ENCODE measurements at regions of chr6 and their contacts with region 1.

Region 1: DNA sequence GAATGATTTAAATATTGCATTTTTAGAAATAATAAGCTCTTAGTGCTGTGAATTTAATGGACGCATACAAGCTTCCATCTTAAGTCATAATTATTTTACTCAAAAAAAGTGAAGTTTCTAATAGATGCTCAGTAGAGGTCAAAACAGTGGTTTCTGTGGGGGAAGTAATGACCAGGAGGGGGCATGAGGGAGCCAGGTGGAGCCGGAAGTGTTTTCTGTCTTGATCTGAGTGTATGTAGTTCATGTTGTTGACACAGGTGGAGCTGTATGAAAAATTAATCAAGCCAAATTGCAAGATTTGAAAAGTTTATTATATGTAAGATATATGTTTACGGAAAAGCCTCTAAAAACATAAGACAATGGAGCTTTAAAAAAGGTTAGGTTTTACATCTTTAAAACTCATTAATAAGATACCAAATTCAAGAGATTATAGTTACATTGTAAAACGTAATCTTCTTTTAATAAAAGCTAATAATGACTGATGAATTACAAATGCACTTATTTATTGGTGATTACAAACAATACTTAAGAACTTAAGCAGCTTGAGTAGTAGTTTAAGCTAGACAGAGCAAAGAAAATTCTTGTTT is 68.0 kb downstream of the PLAGL1 start:
- DNase-seq: peak; percentile 75
- ATAC-seq: peak; percentile 93
- H3K4me3 Mint-ChIP-seq: no peak overlapping the region
- H3K27ac Mint-ChIP-seq: no peak overlapping the region
- H3K4me1 Mint-ChIP-seq: peaks cover 3% of the 10 kb centered on the region
- H3K27me3 Mint-ChIP-seq: no peaks in the 10 kb centered on the region

Region 2: GRCh38 chr6:143575440-143575839 is 364.7 kb before region 1 on chr6:
- CTCF ChIA-PET with region 1: interaction called, 41 read pairs
- POLR2A ChIA-PET with region 1: no interaction called
- intact Hi-C with region 1: loop called (anchors 1 to 5 kb)
- DNase-seq: peak; percentile 58
- ATAC-seq: peak; percentile 93
- H3K4me3 Mint-ChIP-seq: no peak overlapping the region
- H3K27ac Mint-ChIP-seq: no peak overlapping the region
- H3K4me1 Mint-ChIP-seq: no peaks in the 10 kb centered on the region
- H3K27me3 Mint-ChIP-seq: no peaks in the 10 kb centered on the region

Region 3: GRCh38 chr6:143928853-143929252 is 11.3 kb before region 1 on chr6:
- CTCF ChIA-PET with region 1: interaction called, 10 read pairs
- POLR2A ChIA-PET with region 1: interaction called, 3 read pairs
- intact Hi-C with region 1: no loop called
- DNase-seq: no peak
- ATAC-seq: no peak
- H3K4me3 Mint-ChIP-seq: no peak overlapping the region
- H3K27ac Mint-ChIP-seq: no peak overlapping the region
- H3K4me1 Mint-ChIP-seq: no peaks in the 10 kb centered on the region
- H3K27me3 Mint-ChIP-seq: peaks cover 4% of the 10 kb centered on the region

Region 4: GRCh38 chr6:144023216-144023615 is 83.1 kb after region 1 on chr6:
- CTCF ChIA-PET with region 1: interaction called, 10 read pairs
- POLR2A ChIA-PET with region 1: no interaction called
- intact Hi-C with region 1: no loop called
- DNase-seq: no peak
- ATAC-seq: no peak
- H3K4me3 Mint-ChIP-seq: no peak overlapping the region
- H3K27ac Mint-ChIP-seq: no peak overlapping the region
- H3K4me1 Mint-ChIP-seq: no peaks in the 10 kb centered on the region
- H3K27me3 Mint-ChIP-seq: no peaks in the 10 kb centered on the region

Region 5: GRCh38 chr6:144055121-144055931 is 115.2 kb after region 1 on chr6:
- CTCF ChIA-PET with region 1: interaction called, 12 read pairs
- POLR2A ChIA-PET with region 1: no interaction called
- intact Hi-C with region 1: no loop called
- DNase-seq: peak; percentile 74
- ATAC-seq: peak; percentile 85
- H3K4me3 Mint-ChIP-seq: peak overlapping the region; percentile 68
- H3K27ac Mint-ChIP-seq: peak overlapping the region; percentile 97
- H3K4me1 Mint-ChIP-seq: peaks cover 27% of the 10 kb centered on the region
- H3K27me3 Mint-ChIP-seq: no peaks in the 10 kb centered on the region

Region 6: GRCh38 chr6:144090384-144090783 is 150.3 kb after region 1 on chr6:
- CTCF ChIA-PET with region 1: interaction called, 7 read pairs
- POLR2A ChIA-PET with region 1: no interaction called
- intact Hi-C with region 1: loop called (anchors 1 to 5 kb)
- DNase-seq: no peak
- ATAC-seq: no peak
- H3K4me3 Mint-ChIP-seq: no peak overlapping the region
- H3K27ac Mint-ChIP-seq: no peak overlapping the region
- H3K4me1 Mint-ChIP-seq: peaks cover 18% of the 10 kb centered on the region
- H3K27me3 Mint-ChIP-seq: no peaks in the 10 kb centered on the region

Region 7: DNA sequence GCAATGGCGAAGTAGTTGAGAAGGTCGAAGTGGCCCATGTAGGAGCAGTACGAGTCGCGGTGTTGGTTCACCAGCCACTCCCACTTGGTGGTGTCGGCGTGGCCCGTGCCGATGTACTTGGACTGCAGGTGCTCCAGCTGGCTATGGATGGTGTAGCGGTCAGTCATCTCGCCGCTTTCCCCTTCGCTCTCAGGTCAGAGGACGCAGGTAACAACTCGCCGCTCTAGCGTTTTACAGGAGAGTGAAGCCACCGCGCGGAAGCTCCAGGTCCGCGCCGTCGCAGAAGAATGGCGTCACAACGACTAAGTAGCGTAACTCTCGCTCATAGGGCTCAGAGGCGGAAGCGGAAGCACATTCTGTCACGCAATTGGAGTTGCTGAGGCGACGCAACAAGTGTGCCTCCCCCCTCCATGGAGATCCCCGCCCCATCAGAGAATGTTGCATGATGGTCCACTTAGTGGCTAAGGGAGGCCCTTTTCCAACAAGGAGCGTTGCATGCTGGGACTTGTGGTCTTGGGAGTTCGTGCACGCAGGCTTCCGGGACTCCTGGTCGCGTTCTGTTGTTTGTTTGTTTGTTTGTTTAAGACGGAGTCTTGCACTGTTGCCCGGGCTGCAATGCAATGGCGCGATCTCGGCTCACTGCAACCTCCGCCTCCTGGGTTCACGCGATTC is 155.4 kb after region 1 on chr6 and contains the start of gene SF3B5:
- CTCF ChIA-PET with region 1: interaction called, 7 read pairs
- POLR2A ChIA-PET with region 1: no interaction called
- intact Hi-C with region 1: loop called (anchors 1 to 5 kb)
- DNase-seq: peak; percentile 98
- ATAC-seq: peak; percentile 97
- H3K4me3 Mint-ChIP-seq: peak within 1 kb of the TSS; percentile 84
- H3K27ac Mint-ChIP-seq: peak within 1 kb of the TSS; percentile 91
- H3K4me1 Mint-ChIP-seq: peaks cover 22% of the 10 kb centered on the region
- H3K27me3 Mint-ChIP-seq: no peaks in the 10 kb centered on the region
- total RNA-seq, gene SF3B5: 152 to 164 TPM

Region 8: GRCh38 chr6:144493035-144493910 is 553.2 kb after region 1 on chr6:
- CTCF ChIA-PET with region 1: no interaction called
- POLR2A ChIA-PET with region 1: no interaction called
- intact Hi-C with region 1: no loop called
- DNase-seq: no peak
- ATAC-seq: no peak
- H3K4me3 Mint-ChIP-seq: no peak overlapping the region
- H3K27ac Mint-ChIP-seq: no peak overlapping the region
- H3K4me1 Mint-ChIP-seq: peaks cover 9% of the 10 kb centered on the region
- H3K27me3 Mint-ChIP-seq: no peaks in the 10 kb centered on the region

Measured in activated CD4-positive, alpha-beta T cell treated with anti-CD3 and anti-CD28 coated beads for 36 hours (primary cell).